Naive thymus-derived CD4-positive, alpha-beta T cell (primary cell): ENCODE measurements at regions of chr1 and their contacts with region 1.

Region 1: DNA sequence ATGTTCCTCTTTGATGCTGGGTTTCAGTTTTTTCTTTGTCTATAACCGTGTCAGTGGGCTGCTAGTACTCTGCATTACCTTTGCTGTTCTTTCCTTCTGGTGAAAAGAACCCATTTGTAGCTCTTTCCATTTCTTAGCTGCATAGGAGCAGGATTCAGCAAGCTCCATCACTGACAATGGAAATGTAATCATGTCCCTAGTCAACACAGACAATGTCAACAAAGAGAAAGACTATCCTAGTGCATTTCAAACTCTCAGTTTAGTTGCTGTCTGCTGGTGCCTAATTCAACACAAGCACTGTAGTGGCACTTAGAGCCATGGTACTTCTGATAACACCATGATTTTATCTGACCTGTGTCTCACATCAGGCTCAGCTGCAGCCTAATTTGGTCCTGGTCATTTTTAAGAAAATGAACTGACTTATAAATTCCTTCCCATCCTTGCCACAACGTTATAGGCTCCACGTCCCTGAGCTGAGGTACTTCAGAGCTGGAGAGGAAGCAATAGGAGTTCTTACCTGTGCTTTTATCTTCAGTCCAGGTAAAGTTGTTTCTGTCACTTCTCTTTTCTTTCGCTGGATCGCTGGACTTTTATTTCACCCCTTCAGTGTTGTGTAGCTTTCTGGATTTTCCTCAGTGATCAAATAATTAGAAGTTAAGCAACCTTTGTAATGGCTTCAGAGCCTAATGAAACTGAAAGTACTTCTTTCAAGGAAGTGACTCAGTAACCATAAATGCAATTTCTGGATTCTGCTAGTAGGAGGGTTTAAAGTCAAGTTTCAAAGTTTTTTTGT is at the start of gene GBP3:
- DNase-seq: peak in 7 of 9 donors; percentile 22 to 52 (median 41)
- ATAC-seq: peak; percentile 84
- H3K4me3 ChIP-seq: peak within 1 kb of the TSS; percentile 75
- H3K4me3 Mint-ChIP-seq: peak within 1 kb of the TSS; percentile 83 to 99 (median 95)
- H3K27ac ChIP-seq: peak within 1 kb of the TSS; percentile 84
- H3K27ac Mint-ChIP-seq: peak within 1 kb of the TSS; percentile 85 to 99 (median 93)
- H3K4me1 ChIP-seq: peaks cover 16 to 21% of the 10 kb centered on the region in 2 donors
- H3K4me1 Mint-ChIP-seq: peaks cover 30 to 58% (median 48%) of the 10 kb centered on the region in 7 donors
- H3K27me3 ChIP-seq: no peaks in the 10 kb centered on the region
- H3K27me3 Mint-ChIP-seq: no peaks in the 10 kb centered on the region
- total RNA-seq, gene GBP3: 15.9 to 39.9 (median 31.9) TPM

Region 2: DNA sequence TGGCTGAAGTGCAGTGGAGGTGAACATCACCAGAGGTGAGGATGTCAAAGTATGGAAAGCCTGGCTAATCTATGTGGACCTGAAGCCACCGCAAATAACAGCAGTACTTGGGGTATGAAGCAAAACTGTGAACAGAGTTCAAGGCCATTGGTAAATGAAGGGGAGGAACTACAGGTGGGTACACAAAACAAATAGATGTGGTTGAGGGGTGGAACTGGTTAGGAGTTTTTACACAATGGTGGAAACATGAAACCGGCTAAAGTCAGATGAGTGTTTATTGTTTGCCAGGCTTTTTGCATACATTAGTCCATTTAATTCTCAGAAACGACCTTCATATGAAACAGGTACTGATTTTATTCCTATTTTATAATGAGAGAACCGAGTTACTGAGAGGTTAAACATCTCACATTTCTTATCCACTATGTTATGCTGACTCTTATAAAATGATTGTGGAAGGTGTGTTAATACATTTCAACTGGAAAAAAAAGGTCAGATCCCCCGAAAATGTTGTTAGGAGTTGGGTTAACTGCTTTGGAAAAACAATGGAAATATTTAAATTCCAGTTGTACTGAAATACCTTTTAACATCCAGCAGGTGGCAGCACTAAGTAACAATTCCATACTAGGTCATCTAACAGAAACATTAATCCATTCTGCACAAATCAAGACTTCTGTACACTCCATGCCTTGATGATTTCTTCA is 86.7 kb before region 1 on chr1:
- CTCF ChIA-PET with region 1: no interaction called
- POLR2A ChIA-PET with region 1: no interaction called
- intact Hi-C with region 1: no loop called
- DNase-seq: peak in 6 of 9 donors; percentile 15 to 41 (median 32)
- ATAC-seq: peak; percentile 48
- H3K4me3 ChIP-seq: no peak overlapping the region
- H3K4me3 Mint-ChIP-seq: no peak overlapping the region
- H3K27ac ChIP-seq: no peak overlapping the region
- H3K27ac Mint-ChIP-seq: peak overlapping the region in 1 of 9 donors; percentile 45
- H3K4me1 ChIP-seq: no peaks in the 10 kb centered on the region
- H3K4me1 Mint-ChIP-seq: peaks cover 0 to 11% (median 9%) of the 10 kb centered on the region in 7 donors
- H3K27me3 ChIP-seq: no peaks in the 10 kb centered on the region
- H3K27me3 Mint-ChIP-seq: no peaks in the 10 kb centered on the region

Region 3: DNA sequence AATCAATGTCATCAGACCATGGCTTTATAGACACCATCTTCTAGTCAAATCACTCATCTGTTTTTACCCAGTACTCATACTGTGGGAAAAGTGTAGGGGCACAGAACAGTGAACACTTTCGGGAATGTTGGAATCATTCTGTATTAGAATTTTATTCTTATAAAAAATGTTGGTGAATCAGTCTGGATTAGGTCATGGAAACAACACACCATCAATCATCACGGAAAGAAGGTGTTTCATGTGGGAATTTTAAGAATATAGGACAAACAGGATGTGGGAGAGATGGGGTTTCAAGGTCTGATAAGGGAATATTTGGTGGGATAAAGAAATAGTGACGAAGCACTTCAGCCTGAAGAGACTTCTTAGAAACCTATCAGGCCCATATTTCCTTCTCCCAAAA is 25.4 kb after region 1 on chr1:
- CTCF ChIA-PET with region 1: interaction called, 4 read pairs
- POLR2A ChIA-PET with region 1: interaction called, 3 read pairs
- intact Hi-C with region 1: loop called (anchors 2 kb)
- DNase-seq: no peak
- ATAC-seq: no peak
- H3K4me3 ChIP-seq: no peak overlapping the region
- H3K4me3 Mint-ChIP-seq: no peak overlapping the region
- H3K27ac ChIP-seq: no peak overlapping the region
- H3K27ac Mint-ChIP-seq: peak overlapping the region in 3 of 9 donors; percentile 41 to 71 (median 43)
- H3K4me1 ChIP-seq: no peaks in the 10 kb centered on the region
- H3K4me1 Mint-ChIP-seq: peaks cover 0 to 15% (median 4%) of the 10 kb centered on the region in 7 donors
- H3K27me3 ChIP-seq: no peaks in the 10 kb centered on the region
- H3K27me3 Mint-ChIP-seq: no peaks in the 10 kb centered on the region

Region 4: GRCh38 chr1:89104147-89104546 is 81.8 kb after region 1 on chr1:
- CTCF ChIA-PET with region 1: no interaction called
- POLR2A ChIA-PET with region 1: no interaction called
- intact Hi-C with region 1: no loop called
- DNase-seq: no peak
- ATAC-seq: no peak
- H3K4me3 ChIP-seq: no peak overlapping the region
- H3K4me3 Mint-ChIP-seq: no peak overlapping the region
- H3K27ac ChIP-seq: no peak overlapping the region
- H3K27ac Mint-ChIP-seq: peak overlapping the region in 4 of 9 donors; percentile 14 to 71 (median 45)
- H3K4me1 ChIP-seq: no peaks in the 10 kb centered on the region
- H3K4me1 Mint-ChIP-seq: peaks cover 0 to 13% (median 9%) of the 10 kb centered on the region in 7 donors
- H3K27me3 ChIP-seq: no peaks in the 10 kb centered on the region
- H3K27me3 Mint-ChIP-seq: no peaks in the 10 kb centered on the region